ENCODE measurements at regions of chr11 and their contacts with region 1.

Region 1: DNA sequence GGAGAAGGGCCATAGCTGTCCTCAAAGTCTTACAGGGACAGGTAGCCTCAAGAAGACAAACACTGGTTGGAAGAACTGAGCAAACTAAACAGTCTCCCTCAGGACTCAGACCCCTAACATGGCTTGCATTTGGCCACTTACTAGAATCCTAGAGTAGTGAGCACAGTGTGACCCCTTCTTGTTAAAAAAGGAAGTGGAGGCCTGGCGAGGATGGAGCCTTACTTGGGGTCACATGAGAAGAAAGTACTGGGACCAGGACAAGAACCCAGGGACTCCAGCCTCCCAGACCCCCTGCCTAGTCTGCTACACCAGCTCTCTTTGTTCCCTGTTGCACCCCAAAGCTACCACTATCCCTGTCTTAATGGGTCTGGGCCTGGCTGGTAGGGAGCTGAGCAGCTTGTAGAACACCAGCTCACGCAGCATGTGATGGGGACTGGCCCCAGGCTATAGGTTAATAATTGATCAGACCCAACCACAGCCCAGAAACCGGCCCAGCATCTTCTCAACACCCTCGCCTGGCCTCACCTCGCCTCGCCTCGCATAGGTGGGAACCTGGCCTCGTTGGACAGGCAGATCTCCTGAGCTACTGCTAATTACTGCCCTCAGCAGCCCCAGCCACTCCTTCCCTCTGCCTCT is 17.6 kb downstream of the DGAT2 start:
- DNase-seq: peak; percentile 58
- ATAC-seq: peak; percentile 61
- H3K4me3 ChIP-seq: no peak overlapping the region
- H3K27ac ChIP-seq: peak overlapping the region; percentile 39
- H3K4me1 ChIP-seq: peaks cover 73% of the 10 kb centered on the region
- H3K27me3 ChIP-seq: no peaks in the 10 kb centered on the region
- CTCF ChIP-seq: no peak
- EP300 ChIP-seq: no peak
- POLR2A ChIP-seq: peak in 1 of 2 experiments; percentile 38; a peak in 1 of 4 replicates
- RAD21 ChIP-seq: peak; percentile 26; the same call in 1 of the 2 replicates

Region 2: GRCh38 chr11:75717608-75718418 is 68.4 kb before region 1 on chr11 and contains the start of gene MOGAT2:
- CTCF ChIA-PET with region 1: no interaction called
- POLR2A ChIA-PET with region 1: interaction called, 69 read pairs
- in situ Hi-C with region 1: no loop called
- intact Hi-C with region 1: no loop called
- DNase-seq: no peak
- ATAC-seq: no peak
- H3K4me3 ChIP-seq: peak within 1 kb of the TSS in 1 of 3 experiments; percentile 76; a peak in 2 of 6 replicates
- H3K27ac ChIP-seq: peak within 1 kb of the TSS; percentile 79
- H3K4me1 ChIP-seq: peaks cover 77% of the 10 kb centered on the region
- H3K27me3 ChIP-seq: no peaks in the 10 kb centered on the region
- CTCF ChIP-seq: no peak
- EP300 ChIP-seq: no peak
- POLR2A ChIP-seq: no peak
- RAD21 ChIP-seq: no peak
- total RNA-seq, gene MOGAT2: 27.2 and 27.8 TPM in 2 replicates

Region 3: GRCh38 chr11:75762885-75763284 is 23.3 kb before region 1 on chr11:
- CTCF ChIA-PET with region 1: no interaction called
- POLR2A ChIA-PET with region 1: interaction called, 54 read pairs
- in situ Hi-C with region 1: no loop called
- intact Hi-C with region 1: loop called (anchors 2 kb)
- DNase-seq: peak; percentile 88
- ATAC-seq: peak; percentile 78
- H3K4me3 ChIP-seq: no peak overlapping the region
- H3K27ac ChIP-seq: peak overlapping the region; percentile 61
- H3K4me1 ChIP-seq: peaks cover 87% of the 10 kb centered on the region
- H3K27me3 ChIP-seq: no peaks in the 10 kb centered on the region
- CTCF ChIP-seq: no peak
- EP300 ChIP-seq: peak; percentile 73 to 94; a peak in 3 of 4 replicates
- POLR2A ChIP-seq: no peak
- RAD21 ChIP-seq: no peak

Region 4: DNA sequence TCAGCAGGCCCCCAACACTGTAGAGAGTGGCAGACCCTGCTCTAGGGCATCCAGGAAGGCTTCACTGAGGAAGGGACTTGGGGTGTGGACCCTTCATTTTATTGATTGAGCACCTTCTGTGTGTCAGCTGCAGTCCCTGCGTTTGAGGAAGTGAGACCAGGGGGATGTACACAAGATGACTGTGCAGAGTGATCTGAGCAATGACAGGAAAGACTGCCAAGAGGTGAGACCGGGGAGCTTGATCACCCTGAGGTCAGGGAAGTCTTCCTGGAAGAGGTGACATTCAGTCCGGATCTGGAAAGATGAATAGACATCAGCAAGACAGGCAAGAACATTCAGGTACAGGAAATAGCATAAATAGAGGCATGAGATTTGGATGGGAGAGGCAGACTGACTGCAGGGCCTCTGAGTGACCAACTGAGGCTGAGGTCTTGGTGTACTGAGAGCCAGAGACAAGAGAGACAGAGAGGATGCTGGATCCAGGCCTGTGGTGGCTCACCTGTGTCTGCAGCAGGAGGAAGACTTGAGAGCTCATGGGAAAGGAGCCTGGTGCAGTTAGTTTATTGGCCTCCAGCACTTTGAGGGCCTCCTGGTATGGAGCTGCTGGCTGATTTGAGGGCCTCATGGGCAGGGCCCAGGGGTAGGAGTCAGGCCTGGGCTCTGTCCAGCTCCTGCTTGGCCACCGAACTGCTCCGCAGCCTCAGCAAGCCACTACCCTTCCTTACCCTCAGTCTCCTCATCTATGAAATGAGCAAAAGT is 12.4 kb before region 1 on chr11:
- CTCF ChIA-PET with region 1: no interaction called
- POLR2A ChIA-PET with region 1: interaction called, 62 read pairs
- in situ Hi-C with region 1: no loop called
- intact Hi-C with region 1: loop called (anchors 2 kb)
- DNase-seq: no peak
- ATAC-seq: no peak
- H3K4me3 ChIP-seq: no peak overlapping the region
- H3K27ac ChIP-seq: no peak overlapping the region
- H3K4me1 ChIP-seq: peaks cover 36% of the 10 kb centered on the region
- H3K27me3 ChIP-seq: no peaks in the 10 kb centered on the region
- CTCF ChIP-seq: no peak
- EP300 ChIP-seq: no peak
- POLR2A ChIP-seq: no peak
- RAD21 ChIP-seq: no peak

Region 5: GRCh38 chr11:75797792-75798191 is 11.6 kb after region 1 on chr11:
- CTCF ChIA-PET with region 1: no interaction called
- POLR2A ChIA-PET with region 1: interaction called, 138 read pairs
- in situ Hi-C with region 1: no loop called
- intact Hi-C with region 1: no loop called
- DNase-seq: no peak
- ATAC-seq: no peak
- H3K4me3 ChIP-seq: no peak overlapping the region
- H3K27ac ChIP-seq: no peak overlapping the region
- H3K4me1 ChIP-seq: peaks cover 61% of the 10 kb centered on the region
- H3K27me3 ChIP-seq: no peaks in the 10 kb centered on the region
- CTCF ChIP-seq: no peak
- EP300 ChIP-seq: no peak
- POLR2A ChIP-seq: no peak
- RAD21 ChIP-seq: no peak

Region 6: GRCh38 chr11:75802913-75803820 is 16.9 kb after region 1 on chr11:
- CTCF ChIA-PET with region 1: no interaction called
- POLR2A ChIA-PET with region 1: interaction called, 138 read pairs
- in situ Hi-C with region 1: no loop called
- intact Hi-C with region 1: no loop called
- DNase-seq: peak; percentile 63
- ATAC-seq: peak; percentile 93
- H3K4me3 ChIP-seq: no peak overlapping the region
- H3K27ac ChIP-seq: no peak overlapping the region
- H3K4me1 ChIP-seq: peaks cover 16% of the 10 kb centered on the region
- H3K27me3 ChIP-seq: no peaks in the 10 kb centered on the region
- CTCF ChIP-seq: peak; percentile 93
- EP300 ChIP-seq: no peak
- POLR2A ChIP-seq: no peak
- RAD21 ChIP-seq: peak; percentile 87

Region 7: DNA sequence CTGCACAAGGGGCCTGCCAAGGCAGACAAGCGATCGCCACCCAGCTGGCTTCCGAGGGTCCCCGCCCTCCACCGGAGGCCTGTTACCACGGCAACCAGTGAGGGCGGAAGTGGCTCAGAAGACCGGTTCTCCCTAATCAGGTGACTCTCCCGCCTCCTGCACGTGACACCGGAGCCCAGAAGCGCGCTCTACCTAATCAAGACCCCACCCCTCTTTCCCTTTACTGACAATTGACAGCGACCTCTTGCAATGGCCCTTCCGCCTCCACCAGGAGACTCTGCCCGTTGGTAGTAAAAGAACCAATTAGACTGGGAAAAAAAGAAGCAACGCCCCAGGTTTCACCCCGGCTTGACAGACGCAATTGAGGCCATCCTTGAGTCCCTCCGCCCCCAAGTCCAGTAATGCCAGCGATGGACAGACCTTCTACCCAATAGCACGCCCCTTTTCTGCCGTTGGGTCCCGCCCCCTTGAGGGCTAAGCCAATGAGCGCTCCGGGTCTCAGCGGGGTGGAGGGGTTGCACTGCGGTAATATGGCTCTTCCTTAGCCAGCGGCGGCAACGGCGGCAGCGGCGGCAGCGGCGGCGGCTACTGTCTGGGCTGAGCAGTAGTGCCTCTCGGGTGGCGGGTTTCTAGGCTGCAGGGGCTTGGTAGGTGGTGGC is 28.6 kb after region 1 on chr11 and contains the start of gene UVRAG:
- CTCF ChIA-PET with region 1: no interaction called
- POLR2A ChIA-PET with region 1: interaction called, 23 read pairs
- in situ Hi-C with region 1: no loop called
- intact Hi-C with region 1: no loop called
- DNase-seq: peak; percentile 99
- ATAC-seq: peak; percentile 90
- H3K4me3 ChIP-seq: peak within 1 kb of the TSS; percentile 82 to 92 (median 91)
- H3K27ac ChIP-seq: peak within 1 kb of the TSS; percentile 83
- H3K4me1 ChIP-seq: peaks cover 77% of the 10 kb centered on the region
- H3K27me3 ChIP-seq: no peaks in the 10 kb centered on the region; a peak in 1 of 5 replicates
- CTCF ChIP-seq: no peak
- EP300 ChIP-seq: peak in 1 of 2 experiments; percentile 21; a peak in 1 of 4 replicates
- POLR2A ChIP-seq: peak; percentile 43 to 69; a peak in 3 of 4 replicates
- RAD21 ChIP-seq: 0 out of 2 replicates have a peak, but pooled peaks have one; percentile 37
- total RNA-seq, gene UVRAG: 17.2 and 17.3 TPM in 2 replicates

Region 8: DNA sequence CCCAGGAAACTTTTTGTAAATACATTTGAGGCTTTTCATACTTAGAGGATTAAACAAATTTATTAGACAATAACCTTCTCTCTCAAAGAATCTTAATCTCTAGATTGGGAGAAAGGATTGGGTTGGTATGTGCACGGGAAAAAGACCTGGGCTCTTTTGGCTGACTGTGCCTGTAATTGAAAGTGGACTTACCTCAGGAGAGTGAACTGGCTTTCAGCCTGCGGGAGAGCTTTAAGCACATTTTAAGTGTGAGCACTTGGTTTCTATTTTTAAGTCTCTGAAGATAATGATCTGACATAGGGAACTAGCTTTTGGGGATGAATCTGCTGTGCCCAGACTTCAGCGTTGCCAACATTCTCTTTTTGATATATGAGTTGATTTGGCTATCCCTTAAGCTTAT is 64.6 kb after region 1 on chr11:
- CTCF ChIA-PET with region 1: no interaction called
- POLR2A ChIA-PET with region 1: no interaction called
- in situ Hi-C with region 1: no loop called
- intact Hi-C with region 1: no loop called
- DNase-seq: no peak
- ATAC-seq: no peak
- H3K4me3 ChIP-seq: no peak overlapping the region
- H3K27ac ChIP-seq: no peak overlapping the region
- H3K4me1 ChIP-seq: no peaks in the 10 kb centered on the region
- H3K27me3 ChIP-seq: no peaks in the 10 kb centered on the region
- CTCF ChIP-seq: no peak
- EP300 ChIP-seq: no peak
- POLR2A ChIP-seq: no peak
- RAD21 ChIP-seq: no peak

Region 9: GRCh38 chr11:76086743-76087635 is 300.8 kb after region 1 on chr11:
- CTCF ChIA-PET with region 1: no interaction called
- POLR2A ChIA-PET with region 1: no interaction called
- in situ Hi-C with region 1: no loop called
- intact Hi-C with region 1: no loop called
- DNase-seq: no peak
- ATAC-seq: no peak
- H3K4me3 ChIP-seq: no peak overlapping the region
- H3K27ac ChIP-seq: no peak overlapping the region
- H3K4me1 ChIP-seq: no peaks in the 10 kb centered on the region
- H3K27me3 ChIP-seq: no peaks in the 10 kb centered on the region
- CTCF ChIP-seq: no peak
- EP300 ChIP-seq: no peak
- POLR2A ChIP-seq: no peak
- RAD21 ChIP-seq: no peak